AG04449 (cell line): ENCODE measurements at regions of chr2 and their contacts with region 1.

Region 1: GRCh38 chr2:219689676-219690628 is 62.5 kb downstream of the SLC4A3 start:
- DNase-seq: no peak
- H3K4me3 ChIP-seq: no peak overlapping the region
- CTCF ChIP-seq: peak; percentile 63

Region 2: GRCh38 chr2:219530048-219530963 is 159.6 kb before region 1 on chr2:
- CTCF ChIA-PET with region 1: interaction called, 13 read pairs
- POLR2A ChIA-PET with region 1: no interaction called
- DNase-seq: no peak
- H3K4me3 ChIP-seq: peak overlapping the region; percentile 49
- CTCF ChIP-seq: peak; percentile 98

Region 3: GRCh38 chr2:219560037-219560892 is 129.7 kb before region 1 on chr2:
- CTCF ChIA-PET with region 1: interaction called, 23 read pairs
- POLR2A ChIA-PET with region 1: no interaction called
- DNase-seq: no peak
- H3K4me3 ChIP-seq: no peak overlapping the region
- CTCF ChIP-seq: peak; percentile 69

Region 4: GRCh38 chr2:219581411-219581810 is 108.5 kb before region 1 on chr2:
- CTCF ChIA-PET with region 1: no interaction called
- POLR2A ChIA-PET with region 1: no interaction called
- DNase-seq: no peak
- H3K4me3 ChIP-seq: no peak overlapping the region
- CTCF ChIP-seq: no peak

Region 5: GRCh38 chr2:219597552-219598307 is 92.2 kb before region 1 on chr2 and contains the start of gene STK11IP:
- CTCF ChIA-PET with region 1: interaction called, 14 read pairs
- POLR2A ChIA-PET with region 1: no interaction called
- DNase-seq: peak; percentile 70
- H3K4me3 ChIP-seq: peak within 1 kb of the TSS; percentile 84
- CTCF ChIP-seq: no peak

Region 6: GRCh38 chr2:219661197-219661954 is 28.6 kb before region 1 on chr2:
- CTCF ChIA-PET with region 1: interaction called, 15 read pairs
- POLR2A ChIA-PET with region 1: no interaction called
- DNase-seq: no peak
- H3K4me3 ChIP-seq: no peak overlapping the region
- CTCF ChIP-seq: no peak

Region 7: GRCh38 chr2:219707496-219708285 is 17.7 kb after region 1 on chr2:
- CTCF ChIA-PET with region 1: interaction called, 70 read pairs
- POLR2A ChIA-PET with region 1: no interaction called
- DNase-seq: no peak
- H3K4me3 ChIP-seq: no peak overlapping the region
- CTCF ChIP-seq: no peak

Region 8: GRCh38 chr2:220847551-220848005 is 1157.6 kb after region 1 on chr2:
- CTCF ChIA-PET with region 1: no interaction called
- POLR2A ChIA-PET with region 1: no interaction called
- DNase-seq: peak; percentile 91
- H3K4me3 ChIP-seq: no peak overlapping the region
- CTCF ChIP-seq: no peak